ENCODE measurements at regions of chr1 and their contacts with region 1.

Region 1: GRCh38 chr1:210239349-210240111 is 6.9 kb downstream of the SERTAD4 start:
- DNase-seq: peak; percentile 33 to 46
- H3K4me3 ChIP-seq: no peak overlapping the region
- H3K27ac ChIP-seq: peak overlapping the region in 1 of 3 donors; percentile 24
- H3K4me1 ChIP-seq: peaks cover 15 to 48% of the 10 kb centered on the region in 2 donors
- H3K27me3 ChIP-seq: no peaks in the 10 kb centered on the region
- CTCF ChIP-seq: peak in 4 of 6 experiments; percentile 35 to 50 (median 42)
- POLR2A ChIP-seq: no peak

Region 2: GRCh38 chr1:210301615-210302000 is 62.1 kb after region 1 on chr1:
- intact Hi-C with region 1: loop called (anchors 10 kb)
- DNase-seq: peak in 1 of 2 donors; percentile 60
- H3K4me3 ChIP-seq: no peak overlapping the region
- H3K27ac ChIP-seq: no peak overlapping the region
- H3K4me1 ChIP-seq: peaks cover 0 to 26% of the 10 kb centered on the region in 2 donors
- H3K27me3 ChIP-seq: no peaks in the 10 kb centered on the region
- CTCF ChIP-seq: no peak
- POLR2A ChIP-seq: no peak